ENCODE measurements at regions of chr10 and their contacts with region 1.

Region 1: DNA sequence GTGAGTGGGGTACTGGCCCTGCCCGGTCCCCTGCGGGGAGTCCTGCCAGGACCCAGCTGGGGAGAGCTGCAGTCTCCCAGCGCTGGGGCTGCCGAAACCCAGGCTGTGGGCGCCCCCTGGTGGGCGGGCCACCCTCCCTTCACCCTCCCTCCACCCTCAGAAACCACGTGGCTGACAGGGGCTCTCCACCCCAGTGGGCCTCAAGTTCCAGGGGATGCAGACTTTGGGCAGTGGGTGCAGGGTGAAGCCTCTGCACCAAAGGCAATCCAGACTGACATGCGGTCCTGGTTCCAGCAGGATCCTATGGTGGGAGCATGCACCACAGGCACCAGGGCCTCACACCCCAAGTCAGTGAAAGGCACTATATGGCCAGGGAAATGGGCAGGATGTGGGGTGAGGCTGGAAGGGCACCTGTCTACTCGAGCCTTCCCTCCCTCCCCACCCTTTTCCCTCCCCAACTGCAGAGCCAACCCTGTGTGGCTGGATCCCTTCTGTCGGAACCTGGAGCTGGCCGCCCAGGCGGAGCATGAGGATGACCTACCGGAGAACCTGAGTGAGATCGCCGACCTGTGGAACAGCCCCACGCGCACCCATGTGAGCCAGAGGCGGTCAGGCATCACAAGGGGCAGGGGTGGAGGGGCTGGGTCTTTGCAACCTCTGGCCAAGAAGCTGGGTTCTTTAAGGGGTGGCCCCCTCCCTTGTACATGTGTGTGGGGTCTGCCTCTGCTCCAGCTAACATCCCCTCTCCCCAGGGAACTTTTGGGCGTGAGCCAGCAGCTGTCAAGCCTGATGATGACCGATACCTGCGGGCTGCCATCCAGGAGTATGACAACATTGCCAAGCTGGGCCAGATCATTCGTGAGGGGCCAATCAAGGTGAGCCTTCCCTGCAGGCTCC is 38.8 kb downstream of the PSAP start:
- DNase-seq: peak; percentile 73 to 83 (median 76)
- ATAC-seq: peak; percentile 77 to 88 (median 84)
- H3K4me3 ChIP-seq: no peak overlapping the region
- H3K27ac ChIP-seq: no peak overlapping the region
- H3K4me1 ChIP-seq: no peaks in the 10 kb centered on the region
- H3K27me3 ChIP-seq: no peaks in the 10 kb centered on the region
- CTCF ChIP-seq: peak; percentile 81 to 90 (median 85)
- POLR2A ChIP-seq: no peak

Region 2: GRCh38 chr10:71302874-71303568 is 509.2 kb before region 1 on chr10:
- intact Hi-C with region 1: loop called in 1 of 2 experiments (anchors 10 kb)
- DNase-seq: peak in 1 of 3 donors; percentile 26
- ATAC-seq: peak; percentile 36 to 56 (median 38)
- H3K4me3 ChIP-seq: no peak overlapping the region
- H3K27ac ChIP-seq: peak overlapping the region in 1 of 3 donors; percentile 26
- H3K4me1 ChIP-seq: peaks cover 0 to 19% (median 6%) of the 10 kb centered on the region in 4 donors
- H3K27me3 ChIP-seq: no peaks in the 10 kb centered on the region
- CTCF ChIP-seq: peak; percentile 23 to 67 (median 58)
- POLR2A ChIP-seq: no peak

Region 3: DNA sequence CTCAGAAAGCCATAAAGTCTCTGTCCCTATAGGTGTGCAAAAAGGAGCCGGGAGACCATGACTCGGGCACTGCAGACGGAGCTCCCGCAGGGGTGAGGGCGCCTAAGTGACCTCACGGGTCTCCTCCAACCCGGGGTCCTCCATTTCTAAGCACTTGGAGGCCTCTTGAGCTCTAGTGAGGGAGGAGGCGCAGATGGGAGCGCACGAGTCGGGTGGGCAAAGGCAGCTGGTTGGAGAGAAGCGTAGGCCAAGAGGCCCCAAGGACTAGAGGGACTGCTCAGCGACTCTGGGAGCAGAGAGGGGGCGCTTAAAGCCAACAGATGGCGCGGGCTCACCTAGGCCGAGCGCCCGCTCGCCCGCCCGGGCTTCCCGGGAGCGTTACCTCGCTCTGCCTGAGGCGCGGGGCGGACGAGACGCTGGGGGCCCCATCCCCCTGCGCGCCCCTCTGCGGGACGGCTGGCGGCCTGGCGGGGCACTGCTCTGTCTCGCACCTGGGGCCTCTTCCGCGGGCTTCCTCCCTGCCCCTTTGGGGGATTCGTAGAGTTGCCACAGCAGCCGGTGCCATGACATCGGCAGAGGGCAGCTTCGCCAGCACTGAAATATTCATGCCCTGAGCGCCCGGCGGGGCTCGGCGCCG is 416.1 kb before region 1 on chr10:
- intact Hi-C with region 1: loop called in 1 of 2 experiments (anchors 10 kb)
- DNase-seq: peak; percentile 58 to 72 (median 71)
- ATAC-seq: peak; percentile 84 to 87 (median 86)
- H3K4me3 ChIP-seq: peak overlapping the region; percentile 37 to 58 (median 47)
- H3K27ac ChIP-seq: no peak overlapping the region
- H3K4me1 ChIP-seq: peaks cover 0 to 12% (median 0%) of the 10 kb centered on the region in 4 donors
- H3K27me3 ChIP-seq: no peaks in the 10 kb centered on the region
- CTCF ChIP-seq: peak; percentile 40 to 65 (median 57)
- POLR2A ChIP-seq: no peak

Region 4: DNA sequence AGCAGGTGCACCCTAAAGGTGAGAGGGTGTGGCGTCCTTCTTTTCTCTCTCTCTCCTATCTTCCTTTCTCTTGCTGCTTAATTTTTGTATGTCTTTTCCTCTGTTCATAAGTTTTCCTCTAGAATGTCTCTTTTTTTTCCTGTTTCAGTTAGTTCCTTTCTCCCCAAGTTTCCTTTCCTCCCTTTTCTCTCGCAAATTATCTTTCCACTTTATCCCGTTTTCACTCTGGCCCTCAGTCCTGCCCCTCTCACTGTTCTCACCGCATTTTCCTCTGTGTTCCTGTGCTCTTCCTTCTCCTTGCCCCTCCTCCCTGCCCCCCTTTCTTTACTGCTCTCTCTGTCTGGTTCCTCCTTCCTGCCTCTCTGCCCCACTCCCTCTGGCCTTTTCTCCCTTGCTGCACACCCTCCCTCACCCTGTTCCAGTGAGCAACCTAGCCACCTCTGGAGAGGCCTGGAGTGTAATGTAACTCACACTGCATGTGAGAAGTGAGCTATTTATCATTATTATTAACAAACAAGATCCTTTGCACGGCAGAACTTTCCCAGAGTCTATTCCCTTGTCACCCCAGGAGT is 251.2 kb before region 1 on chr10:
- intact Hi-C with region 1: no loop called
- DNase-seq: no peak
- ATAC-seq: peak in 1 of 4 donors; percentile 17
- H3K4me3 ChIP-seq: no peak overlapping the region
- H3K27ac ChIP-seq: no peak overlapping the region
- H3K4me1 ChIP-seq: no peaks in the 10 kb centered on the region
- H3K27me3 ChIP-seq: no peaks in the 10 kb centered on the region
- CTCF ChIP-seq: no peak
- POLR2A ChIP-seq: no peak

Region 5: DNA sequence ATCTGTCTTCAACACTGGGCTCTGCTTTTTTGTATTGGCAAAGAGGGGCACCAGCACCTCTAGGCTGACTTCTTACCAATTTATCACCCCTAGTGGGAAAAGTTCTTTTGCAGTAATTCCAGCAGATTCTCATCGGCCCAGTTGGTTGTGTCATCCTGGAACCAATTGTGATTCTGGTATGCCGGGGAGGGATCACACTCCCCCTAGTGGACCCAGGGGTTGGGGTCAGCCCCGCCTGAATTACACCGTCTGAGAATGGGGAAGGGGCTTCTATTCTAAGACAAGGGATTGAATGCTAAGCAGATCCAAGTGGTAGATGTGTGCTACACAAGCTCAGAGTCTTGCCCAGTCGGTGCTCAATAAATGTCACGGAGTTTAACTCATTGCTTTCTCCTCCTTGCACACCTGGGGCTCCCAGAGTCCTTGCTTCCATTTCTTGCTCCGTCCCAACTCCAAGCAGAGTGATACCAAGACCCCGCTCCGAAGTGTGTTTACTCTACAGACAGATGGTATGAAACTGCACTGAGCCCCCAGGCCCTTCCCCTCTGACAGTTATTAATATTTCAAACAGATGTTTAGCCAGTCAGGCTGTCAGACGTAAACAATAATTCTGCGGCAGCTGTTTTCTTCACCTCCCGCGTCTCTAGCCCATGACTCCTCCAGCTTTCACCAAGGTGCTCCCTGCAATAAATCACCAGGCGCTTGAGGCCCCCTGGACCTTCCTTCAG is 164.6 kb before region 1 on chr10:
- intact Hi-C with region 1: no loop called
- DNase-seq: no peak
- ATAC-seq: peak; percentile 12 to 59 (median 38)
- H3K4me3 ChIP-seq: no peak overlapping the region
- H3K27ac ChIP-seq: no peak overlapping the region
- H3K4me1 ChIP-seq: peaks cover 0 to 14% (median 9%) of the 10 kb centered on the region in 4 donors
- H3K27me3 ChIP-seq: no peaks in the 10 kb centered on the region
- CTCF ChIP-seq: peak; percentile 35 to 43 (median 39)
- POLR2A ChIP-seq: no peak

Region 6: DNA sequence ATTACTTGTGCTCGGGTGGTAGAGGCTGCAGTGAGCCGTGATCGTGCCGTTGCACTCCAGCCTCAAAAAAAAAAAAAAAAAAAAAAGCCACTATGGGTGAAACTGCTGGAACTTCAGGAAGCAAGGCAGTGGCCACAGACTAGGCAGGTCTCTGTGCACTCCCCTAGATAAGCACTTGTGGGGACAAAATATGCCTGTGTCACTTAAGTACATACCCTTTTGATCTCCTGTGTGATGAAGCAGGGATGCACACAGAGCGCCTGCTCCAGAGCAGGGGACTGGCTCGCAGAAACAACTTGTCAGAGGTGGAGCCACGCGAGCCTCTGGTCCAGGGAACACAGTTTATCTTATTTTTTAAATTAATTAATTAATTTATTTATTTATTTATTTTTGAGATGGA is 81.7 kb after region 1 on chr10:
- intact Hi-C with region 1: loop called in 1 of 2 experiments (anchors 10 kb)
- DNase-seq: peak in 1 of 3 donors; percentile 22
- ATAC-seq: no peak
- H3K4me3 ChIP-seq: no peak overlapping the region
- H3K27ac ChIP-seq: no peak overlapping the region
- H3K4me1 ChIP-seq: peaks cover 0 to 4% (median 0%) of the 10 kb centered on the region in 4 donors
- H3K27me3 ChIP-seq: no peaks in the 10 kb centered on the region
- CTCF ChIP-seq: no peak
- POLR2A ChIP-seq: no peak

Region 7: DNA sequence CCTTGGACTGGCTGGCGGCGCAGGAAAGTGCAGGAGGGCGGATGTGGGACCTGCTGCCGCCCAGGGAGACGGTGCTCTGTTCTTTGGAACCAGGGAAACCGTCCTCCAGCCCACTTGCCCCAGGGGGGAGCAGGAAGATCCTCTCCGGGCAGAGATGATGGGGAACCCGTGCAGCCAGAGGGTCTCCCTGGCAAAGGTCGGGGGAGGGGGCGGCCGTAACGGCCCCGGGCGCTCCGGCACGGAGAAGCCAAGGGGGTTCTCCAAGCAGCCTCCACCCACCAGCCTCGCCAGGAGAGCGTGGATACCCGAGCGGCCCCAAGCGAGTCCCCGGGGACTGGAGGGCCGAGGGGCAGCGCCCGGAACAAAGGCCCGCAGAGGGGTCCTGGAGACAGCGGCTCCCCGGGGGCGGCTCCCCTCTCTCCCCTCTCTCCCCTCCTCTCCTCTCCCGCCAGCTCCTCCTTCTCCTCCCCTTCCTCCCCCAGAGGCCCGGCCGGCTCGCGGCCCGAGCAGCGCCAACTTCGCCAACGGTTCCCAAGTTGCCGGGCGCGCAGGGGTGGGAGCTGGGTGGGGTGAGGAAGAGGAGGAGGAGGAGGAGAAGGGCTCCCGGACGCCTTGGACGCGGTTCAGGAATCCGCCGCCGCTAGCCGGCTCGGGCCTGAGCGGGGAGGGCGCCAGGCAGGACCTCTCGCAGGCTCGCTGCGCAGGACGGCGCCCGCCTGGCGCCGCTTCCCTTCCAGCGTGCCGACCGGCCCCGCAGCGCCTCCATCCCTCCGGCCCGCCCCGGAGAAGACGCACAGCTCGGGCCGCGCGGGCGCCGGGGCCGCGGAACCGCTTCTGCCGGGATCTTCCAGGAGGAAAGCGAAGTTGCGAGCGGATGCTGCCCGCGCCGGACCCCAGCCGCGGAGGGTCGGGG is 151.7 kb after region 1 on chr10 and contains the start of gene CHST3:
- intact Hi-C with region 1: no loop called
- DNase-seq: peak; percentile 58 to 69 (median 60)
- ATAC-seq: peak; percentile 79 to 86 (median 84)
- H3K4me3 ChIP-seq: peak within 1 kb of the TSS; percentile 40 to 51 (median 45)
- H3K27ac ChIP-seq: peak within 1 kb of the TSS; percentile 63 to 75 (median 66)
- H3K4me1 ChIP-seq: peaks cover 0 to 14% (median 0%) of the 10 kb centered on the region in 4 donors
- H3K27me3 ChIP-seq: no peaks in the 10 kb centered on the region
- CTCF ChIP-seq: no peak
- POLR2A ChIP-seq: peak; percentile 20
- total RNA-seq, gene CHST3: 0.81 to 2.5 (median 1.8) TPM